ENCODE measurements at regions of chr6 and their contacts with region 1.

Region 1: DNA sequence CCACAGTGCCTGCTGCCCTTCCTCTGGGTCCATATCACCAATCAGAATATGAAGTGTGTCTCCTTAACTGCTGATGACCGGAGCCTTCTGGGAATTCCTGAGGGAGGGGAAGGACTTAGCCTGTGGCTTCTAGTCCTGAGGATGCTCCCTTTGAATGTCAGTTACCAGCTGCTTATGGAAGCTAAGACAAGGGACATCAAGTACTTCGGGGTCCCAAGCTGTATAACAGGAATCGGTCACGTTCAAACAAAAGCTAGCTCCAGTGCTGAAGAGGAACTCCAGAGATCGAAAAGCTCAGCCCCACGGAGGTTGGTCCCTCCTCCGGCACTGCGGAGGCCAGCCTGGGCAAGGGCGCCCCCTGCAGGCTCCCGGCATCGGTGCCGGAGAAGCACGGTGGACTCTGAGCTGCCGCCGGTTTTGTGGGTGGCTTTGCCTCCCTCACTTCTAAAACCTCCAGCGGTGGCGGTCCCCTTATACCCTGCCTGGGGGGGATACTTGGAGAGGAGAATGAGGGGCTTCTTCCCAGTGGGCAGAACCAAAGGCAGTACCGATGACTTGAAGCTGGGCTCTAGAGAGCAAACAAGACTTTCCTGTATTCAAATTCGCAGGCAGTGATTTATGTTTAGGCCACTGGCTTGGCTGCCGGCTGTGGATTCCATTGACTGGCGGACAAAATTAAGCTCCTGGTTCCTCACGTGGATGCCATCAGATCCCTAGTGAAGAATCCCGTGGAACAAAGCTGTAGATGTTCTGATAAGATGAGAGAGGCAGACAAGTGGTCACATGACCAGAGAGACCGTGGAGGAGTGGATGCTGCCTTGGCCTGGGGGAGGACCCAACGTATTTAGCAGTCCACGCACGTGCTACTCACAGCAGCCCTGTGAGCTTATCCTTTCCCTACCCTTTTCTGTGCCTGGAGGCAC is 16.2 kb upstream of the UBR2 start:
- DNase-seq: peak; percentile 89
- ATAC-seq: peak; percentile 98
- H3K4me3 ChIP-seq: peak overlapping the region; percentile 31 to 65 (median 56)
- H3K4me3 Mint-ChIP-seq: peak overlapping the region; percentile 84
- H3K27ac ChIP-seq: peak overlapping the region; percentile 3 to 43
- H3K27ac Mint-ChIP-seq: peak overlapping the region; percentile 78
- H3K4me1 ChIP-seq: peaks cover 11 to 13% of the 10 kb centered on the region in 2 donors
- H3K4me1 Mint-ChIP-seq: peaks cover 14% of the 10 kb centered on the region
- H3K27me3 ChIP-seq: peaks cover 0 to 5% (median 0%) of the 10 kb centered on the region in 4 experiments
- H3K27me3 Mint-ChIP-seq: peaks cover 7% of the 10 kb centered on the region
- CTCF ChIP-seq: peak; percentile 98

Region 2: GRCh38 chr6:41836022-41836659 is 711.5 kb before region 1 on chr6:
- CTCF ChIA-PET with region 1: no interaction called
- POLR2A ChIA-PET with region 1: no interaction called
- intact Hi-C with region 1: no loop called
- DNase-seq: no peak
- ATAC-seq: no peak
- H3K4me3 ChIP-seq: no peak overlapping the region
- H3K4me3 Mint-ChIP-seq: no peak overlapping the region
- H3K27ac ChIP-seq: no peak overlapping the region
- H3K27ac Mint-ChIP-seq: no peak overlapping the region
- H3K4me1 ChIP-seq: no peaks in the 10 kb centered on the region
- H3K4me1 Mint-ChIP-seq: no peaks in the 10 kb centered on the region
- H3K27me3 ChIP-seq: no peaks in the 10 kb centered on the region
- H3K27me3 Mint-ChIP-seq: no peaks in the 10 kb centered on the region
- CTCF ChIP-seq: no peak

Region 3: GRCh38 chr6:42104095-42104806 is 443.4 kb before region 1 on chr6:
- CTCF ChIA-PET with region 1: interaction called, 10 read pairs
- POLR2A ChIA-PET with region 1: no interaction called
- intact Hi-C with region 1: no loop called
- DNase-seq: peak; percentile 81
- ATAC-seq: peak; percentile 73
- H3K4me3 ChIP-seq: peak overlapping the region; percentile 3 to 65 (median 47)
- H3K4me3 Mint-ChIP-seq: peak overlapping the region; percentile 75
- H3K27ac ChIP-seq: no peak overlapping the region
- H3K27ac Mint-ChIP-seq: peak overlapping the region; percentile 10
- H3K4me1 ChIP-seq: peaks cover 6 to 11% of the 10 kb centered on the region in 2 donors
- H3K4me1 Mint-ChIP-seq: peaks cover 8% of the 10 kb centered on the region
- H3K27me3 ChIP-seq: peaks cover 0 to 25% (median 2%) of the 10 kb centered on the region in 4 experiments
- H3K27me3 Mint-ChIP-seq: peaks cover 19% of the 10 kb centered on the region
- CTCF ChIP-seq: peak; percentile 90

Region 4: GRCh38 chr6:42260972-42261371 is 286.7 kb before region 1 on chr6:
- CTCF ChIA-PET with region 1: interaction called, 54 read pairs
- POLR2A ChIA-PET with region 1: interaction called, 3 read pairs
- intact Hi-C with region 1: no loop called
- DNase-seq: peak; percentile 39
- ATAC-seq: peak; percentile 31
- H3K4me3 ChIP-seq: no peak overlapping the region
- H3K4me3 Mint-ChIP-seq: no peak overlapping the region
- H3K27ac ChIP-seq: no peak overlapping the region
- H3K27ac Mint-ChIP-seq: no peak overlapping the region
- H3K4me1 ChIP-seq: no peaks in the 10 kb centered on the region
- H3K4me1 Mint-ChIP-seq: no peaks in the 10 kb centered on the region
- H3K27me3 ChIP-seq: no peaks in the 10 kb centered on the region
- H3K27me3 Mint-ChIP-seq: no peaks in the 10 kb centered on the region
- CTCF ChIP-seq: peak; percentile 38

Region 5: GRCh38 chr6:42440778-42441696 is 106.6 kb before region 1 on chr6:
- CTCF ChIA-PET with region 1: no interaction called
- POLR2A ChIA-PET with region 1: no interaction called
- intact Hi-C with region 1: no loop called
- DNase-seq: no peak
- ATAC-seq: no peak
- H3K4me3 ChIP-seq: no peak overlapping the region
- H3K4me3 Mint-ChIP-seq: no peak overlapping the region
- H3K27ac ChIP-seq: no peak overlapping the region
- H3K27ac Mint-ChIP-seq: no peak overlapping the region
- H3K4me1 ChIP-seq: no peaks in the 10 kb centered on the region
- H3K4me1 Mint-ChIP-seq: no peaks in the 10 kb centered on the region
- H3K27me3 ChIP-seq: no peaks in the 10 kb centered on the region
- H3K27me3 Mint-ChIP-seq: no peaks in the 10 kb centered on the region
- CTCF ChIP-seq: no peak

Region 6: DNA sequence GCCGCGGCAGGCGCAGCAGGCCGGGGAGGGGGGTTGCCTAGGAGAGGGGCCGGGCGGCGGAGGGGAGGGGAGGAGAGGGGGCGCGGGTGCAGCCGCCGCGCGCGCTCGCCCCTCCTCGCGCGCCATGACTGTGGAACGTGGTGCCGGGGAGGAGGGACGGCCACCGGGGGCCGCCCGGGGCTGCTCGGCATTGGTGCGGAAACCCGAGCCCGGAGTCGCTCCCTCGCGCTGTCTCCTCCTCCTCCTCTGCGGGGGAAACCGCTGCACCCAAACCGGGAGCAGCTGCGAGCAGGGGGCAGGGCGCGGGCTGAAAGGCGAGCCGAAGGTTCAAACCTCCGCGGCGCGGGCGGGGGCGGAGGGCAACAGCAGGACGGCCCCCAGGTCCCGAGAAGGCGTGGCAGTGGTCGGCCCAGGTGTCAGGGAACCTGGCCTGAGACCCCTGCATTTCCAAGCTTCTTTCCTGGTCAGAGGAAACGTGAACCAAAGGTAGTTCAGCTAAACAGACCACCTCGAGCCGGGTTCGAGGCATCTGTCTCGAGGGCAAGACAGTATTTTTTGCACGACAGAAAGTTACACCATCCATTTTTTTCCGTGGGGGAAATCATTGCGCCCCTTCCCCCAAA is 94.5 kb before region 1 on chr6:
- CTCF ChIA-PET with region 1: interaction called, 7 read pairs
- POLR2A ChIA-PET with region 1: interaction called, 4 read pairs
- intact Hi-C with region 1: loop called (anchors 10 kb)
- DNase-seq: peak; percentile 65
- ATAC-seq: peak; percentile 65
- H3K4me3 ChIP-seq: peak overlapping the region; percentile 44 to 71 (median 68)
- H3K4me3 Mint-ChIP-seq: peak overlapping the region; percentile 98
- H3K27ac ChIP-seq: no peak overlapping the region
- H3K27ac Mint-ChIP-seq: no peak overlapping the region
- H3K4me1 ChIP-seq: peaks cover 28 to 32% of the 10 kb centered on the region in 2 donors
- H3K4me1 Mint-ChIP-seq: peaks cover 40% of the 10 kb centered on the region
- H3K27me3 ChIP-seq: peaks cover 0 to 44% (median 8%) of the 10 kb centered on the region in 4 experiments
- H3K27me3 Mint-ChIP-seq: peaks cover 14% of the 10 kb centered on the region
- CTCF ChIP-seq: no peak

Region 7: GRCh38 chr6:42532038-42532669 is 15.5 kb before region 1 on chr6:
- CTCF ChIA-PET with region 1: interaction called, 46 read pairs
- POLR2A ChIA-PET with region 1: no interaction called
- intact Hi-C with region 1: no loop called
- DNase-seq: peak; percentile 51
- ATAC-seq: peak; percentile 54
- H3K4me3 ChIP-seq: no peak overlapping the region
- H3K4me3 Mint-ChIP-seq: no peak overlapping the region
- H3K27ac ChIP-seq: no peak overlapping the region
- H3K27ac Mint-ChIP-seq: no peak overlapping the region
- H3K4me1 ChIP-seq: no peaks in the 10 kb centered on the region
- H3K4me1 Mint-ChIP-seq: no peaks in the 10 kb centered on the region
- H3K27me3 ChIP-seq: no peaks in the 10 kb centered on the region
- H3K27me3 Mint-ChIP-seq: no peaks in the 10 kb centered on the region
- CTCF ChIP-seq: peak; percentile 92

Region 8: GRCh38 chr6:42563697-42564505 is 16.2 kb after region 1 on chr6 and contains the start of gene UBR2:
- CTCF ChIA-PET with region 1: interaction called, 24 read pairs
- POLR2A ChIA-PET with region 1: interaction called, 4 read pairs
- intact Hi-C with region 1: loop called (anchors 1 kb)
- DNase-seq: peak; percentile 95
- ATAC-seq: peak; percentile 96
- H3K4me3 ChIP-seq: peak within 1 kb of the TSS; percentile 78 to 98 (median 91)
- H3K4me3 Mint-ChIP-seq: peak within 1 kb of the TSS; percentile 98
- H3K27ac ChIP-seq: peak within 1 kb of the TSS; percentile 90 to 91
- H3K27ac Mint-ChIP-seq: peak within 1 kb of the TSS; percentile 98
- H3K4me1 ChIP-seq: peaks cover 19 to 25% of the 10 kb centered on the region in 2 donors
- H3K4me1 Mint-ChIP-seq: peaks cover 36% of the 10 kb centered on the region
- H3K27me3 ChIP-seq: no peaks in the 10 kb centered on the region
- H3K27me3 Mint-ChIP-seq: no peaks in the 10 kb centered on the region
- CTCF ChIP-seq: peak; percentile 41
- total RNA-seq, gene UBR2: 56.2 and 61.5 TPM in 2 replicates

Measured in B cell (primary cell).